HEK293 (cell line): ENCODE measurements at regions of chr6 and their contacts with region 1.

Region 1: GRCh38 chr6:57316581-57317059 is 810 bp upstream of the PRIM2 start:
- H3K4me3 ChIP-seq: peak overlapping the region; percentile 80
- H3K27ac ChIP-seq: peak overlapping the region; percentile 43; the same call in 1 of the 2 replicates
- H3K4me1 ChIP-seq: peaks cover 7% of the 10 kb centered on the region; the same call in 1 of the 2 replicates
- CTCF ChIP-seq: peak; percentile 84

Region 2: GRCh38 chr6:56914798-56915658 is 401.6 kb before region 1 on chr6:
- CTCF ChIA-PET with region 1: interaction called, 13 read pairs
- POLR2A ChIA-PET with region 1: no interaction called
- H3K4me3 ChIP-seq: no peak overlapping the region
- H3K27ac ChIP-seq: no peak overlapping the region
- H3K4me1 ChIP-seq: peaks cover 7% of the 10 kb centered on the region; the same call in 1 of the 2 replicates
- CTCF ChIP-seq: no peak

Region 3: GRCh38 chr6:56955171-56956045 is 361.2 kb before region 1 on chr6:
- CTCF ChIA-PET with region 1: interaction called, 11 read pairs
- POLR2A ChIA-PET with region 1: no interaction called
- H3K4me3 ChIP-seq: peak overlapping the region; percentile 62
- H3K27ac ChIP-seq: peak overlapping the region; percentile 70; the same call in 1 of the 2 replicates
- H3K4me1 ChIP-seq: peaks cover 6% of the 10 kb centered on the region
- CTCF ChIP-seq: peak; percentile 94

Region 4: DNA sequence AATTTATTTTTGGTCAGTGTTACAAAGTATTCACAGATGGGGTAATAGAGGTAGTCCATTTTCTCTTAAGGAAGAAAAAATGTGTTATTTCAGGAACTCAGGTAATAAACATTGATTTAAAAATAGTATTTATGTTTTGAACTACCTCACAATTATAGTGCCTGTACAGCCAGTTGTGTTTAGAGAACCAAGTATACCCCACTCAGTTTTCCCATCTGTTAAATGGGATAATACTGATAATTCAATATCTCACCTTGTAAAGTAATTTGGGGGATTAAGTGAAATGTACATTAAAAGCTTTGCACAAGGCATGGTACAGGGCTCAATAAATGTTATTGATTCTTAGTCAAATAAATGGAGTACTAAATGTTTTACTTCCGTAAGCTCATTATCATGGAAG is 221.9 kb before region 1 on chr6:
- CTCF ChIA-PET with region 1: interaction called, 11 read pairs
- POLR2A ChIA-PET with region 1: no interaction called
- H3K4me3 ChIP-seq: no peak overlapping the region
- H3K27ac ChIP-seq: no peak overlapping the region
- H3K4me1 ChIP-seq: peaks cover 13% of the 10 kb centered on the region
- CTCF ChIP-seq: no peak

Region 5: GRCh38 chr6:57190140-57190539 is 126.5 kb before region 1 on chr6:
- CTCF ChIA-PET with region 1: interaction called, 53 read pairs
- POLR2A ChIA-PET with region 1: no interaction called
- H3K4me3 ChIP-seq: no peak overlapping the region
- H3K27ac ChIP-seq: no peak overlapping the region
- H3K4me1 ChIP-seq: no peaks in the 10 kb centered on the region
- CTCF ChIP-seq: no peak

Region 6: DNA sequence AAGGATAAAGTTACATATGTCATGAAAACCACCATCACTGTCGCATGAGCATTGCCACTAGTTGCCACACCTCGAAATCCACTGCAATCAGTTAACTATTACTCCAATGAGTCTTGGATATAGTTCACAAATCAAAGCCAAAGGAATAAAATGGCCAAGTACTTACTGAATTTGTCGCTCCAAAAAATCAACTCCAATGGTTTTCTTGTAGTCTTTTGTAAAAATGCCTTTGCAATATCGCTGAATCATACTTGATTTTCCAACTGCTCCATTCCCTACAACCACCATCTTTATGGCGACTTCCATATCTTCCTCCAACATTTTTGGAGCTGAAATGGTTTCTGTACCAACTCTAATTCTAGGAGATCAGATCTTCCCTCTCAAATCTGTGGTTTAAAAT is 106.6 kb before region 1 on chr6:
- CTCF ChIA-PET with region 1: no interaction called
- POLR2A ChIA-PET with region 1: no interaction called
- H3K4me3 ChIP-seq: no peak overlapping the region
- H3K27ac ChIP-seq: no peak overlapping the region
- H3K4me1 ChIP-seq: no peaks in the 10 kb centered on the region
- CTCF ChIP-seq: no peak

Region 7: DNA sequence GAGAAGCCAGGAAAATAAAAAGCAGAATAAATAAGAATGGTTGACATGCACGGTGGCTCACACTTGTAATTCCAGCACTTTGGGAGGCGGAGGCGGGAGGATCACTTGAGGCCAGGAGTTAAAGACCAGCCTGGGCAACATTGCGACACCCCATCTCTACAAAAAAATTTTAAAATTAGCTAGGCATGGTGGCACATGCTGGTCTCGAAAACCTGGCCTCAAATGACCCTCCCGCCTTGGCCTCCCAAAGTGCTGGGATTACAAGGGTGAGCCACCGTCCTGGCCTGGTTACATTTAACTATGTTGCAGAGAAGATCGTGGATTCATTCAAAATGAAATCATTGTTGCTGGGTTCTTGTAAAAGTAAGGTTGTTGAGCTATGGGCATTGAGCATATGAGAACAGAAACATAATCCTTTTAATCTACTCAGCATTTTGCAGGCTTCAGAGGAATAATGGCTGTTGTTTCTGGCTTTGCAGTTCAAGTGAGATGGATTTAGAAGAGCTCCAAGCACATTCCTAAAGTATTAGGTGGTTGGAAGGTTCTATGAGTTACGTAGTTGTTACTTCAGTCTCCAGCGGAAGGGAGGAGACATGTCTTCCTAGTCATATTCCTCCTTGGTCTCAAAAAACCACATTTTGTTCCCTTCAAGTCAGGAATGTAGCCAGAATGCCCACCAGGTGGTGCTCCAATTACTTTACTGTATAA is 48.9 kb before region 1 on chr6:
- CTCF ChIA-PET with region 1: interaction called, 46 read pairs
- POLR2A ChIA-PET with region 1: interaction called, 3 read pairs
- H3K4me3 ChIP-seq: no peak overlapping the region
- H3K27ac ChIP-seq: no peak overlapping the region
- H3K4me1 ChIP-seq: no peaks in the 10 kb centered on the region
- CTCF ChIP-seq: 0 out of 2 replicates have a peak, but pooled peaks have one; percentile 20

Region 8: DNA sequence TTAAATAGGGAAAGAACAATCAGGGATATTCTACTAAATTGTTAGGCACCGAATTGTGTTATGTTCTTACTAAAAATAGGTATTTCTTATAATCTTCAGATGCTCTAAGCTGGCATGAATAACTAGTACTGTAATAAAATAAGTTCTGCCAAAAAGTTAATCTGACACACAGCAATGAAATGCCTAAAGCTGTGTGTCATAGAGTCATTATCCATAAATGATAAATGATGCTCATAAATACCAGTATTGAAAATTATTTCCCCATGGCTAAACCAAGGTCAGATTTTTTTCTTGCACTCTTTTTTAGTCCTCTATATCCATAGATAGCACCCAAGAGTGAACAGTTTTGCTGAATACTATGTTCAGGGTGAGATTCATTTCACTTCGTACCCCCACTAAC is 10.9 kb before region 1 on chr6:
- CTCF ChIA-PET with region 1: interaction called, 17 read pairs
- POLR2A ChIA-PET with region 1: no interaction called
- H3K4me3 ChIP-seq: no peak overlapping the region
- H3K27ac ChIP-seq: no peak overlapping the region
- H3K4me1 ChIP-seq: 0 out of 2 replicates have a peak, but pooled peaks cover 4% of the 10 kb centered on the region
- CTCF ChIP-seq: no peak